MCF 10A (cell line): ENCODE measurements at regions of chr2 and their contacts with region 1.

Region 1: DNA sequence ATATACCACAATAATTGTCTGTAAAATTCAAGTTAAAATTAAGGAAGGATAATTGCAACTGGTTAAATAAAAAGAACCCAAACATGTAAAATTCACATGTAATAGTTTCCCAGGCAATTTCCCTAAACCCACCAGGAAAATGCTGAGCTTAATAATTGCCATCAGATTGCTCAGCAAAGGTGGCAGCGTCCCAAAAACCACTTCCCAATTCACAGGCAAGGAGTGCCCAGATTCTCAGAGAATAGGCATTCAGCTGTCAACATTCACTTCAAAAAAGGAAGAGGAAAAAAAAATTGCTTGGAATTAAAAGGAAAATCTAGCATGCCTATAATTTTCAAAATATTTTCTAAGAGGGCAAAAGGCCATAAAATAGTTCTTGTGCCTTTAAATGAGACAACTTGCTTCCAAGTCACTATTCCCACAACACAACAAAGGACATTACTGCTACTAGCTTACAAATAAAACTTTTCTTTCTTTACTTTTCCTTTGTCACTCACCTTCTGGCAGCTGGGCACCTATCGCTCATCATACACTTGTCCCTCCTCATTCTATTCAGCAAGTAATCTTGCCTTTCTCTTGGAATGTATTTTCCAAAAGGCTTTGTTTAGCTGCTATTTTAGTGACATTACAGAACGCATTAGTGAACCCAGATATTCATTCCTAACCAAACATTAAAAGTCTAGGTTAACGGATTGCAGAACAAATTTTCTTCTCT is 15.2 kb downstream of the SRBD1 start:
- DNase-seq: peak; percentile 42
- H3K4me3 Mint-ChIP-seq: peak overlapping the region; percentile 1
- H3K27ac Mint-ChIP-seq: peak overlapping the region; percentile 80
- H3K4me1 Mint-ChIP-seq: peaks cover 10% of the 10 kb centered on the region
- H3K27me3 Mint-ChIP-seq: no peaks in the 10 kb centered on the region
- CTCF ChIP-seq: no peak

Region 2: DNA sequence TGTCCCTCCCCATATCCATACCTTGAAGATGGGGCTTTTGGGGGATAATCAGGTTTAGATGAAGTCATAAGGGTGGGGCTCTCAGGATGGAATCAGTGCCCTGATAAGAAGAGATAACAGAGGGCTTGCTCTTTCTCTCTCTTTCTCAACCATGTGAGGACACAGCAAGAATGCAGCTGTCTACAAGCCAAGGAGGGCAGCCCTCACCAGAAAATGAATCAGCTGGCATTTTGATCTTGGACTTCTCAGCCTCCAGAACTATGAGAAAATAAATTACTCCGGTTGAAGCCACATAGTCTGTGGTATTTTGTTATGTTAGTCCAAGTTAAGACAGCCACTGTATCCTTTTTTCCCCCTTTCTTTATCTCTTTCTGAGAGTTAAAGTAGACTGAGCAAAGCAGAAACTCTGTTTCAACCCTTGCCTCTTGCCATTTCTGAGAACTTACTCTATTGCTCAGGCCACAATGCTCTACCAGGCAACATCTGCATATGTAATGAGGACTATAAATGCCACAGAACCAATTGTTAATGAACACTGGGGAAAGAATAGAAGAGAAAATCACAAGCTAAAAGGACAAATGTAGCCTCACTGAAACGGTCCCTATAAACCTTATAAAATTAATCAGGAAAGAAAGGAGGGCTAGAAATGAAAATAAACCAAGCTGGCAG is 41.7 kb before region 1 on chr2:
- CTCF ChIA-PET with region 1: no interaction called
- POLR2A ChIA-PET with region 1: no interaction called
- intact Hi-C with region 1: no loop called
- DNase-seq: no peak
- H3K4me3 Mint-ChIP-seq: no peak overlapping the region
- H3K27ac Mint-ChIP-seq: no peak overlapping the region
- H3K4me1 Mint-ChIP-seq: peaks cover under 1% of the 10 kb centered on the region
- H3K27me3 Mint-ChIP-seq: no peaks in the 10 kb centered on the region
- CTCF ChIP-seq: no peak

Region 3: GRCh38 chr2:45585267-45585861 is 10.5 kb before region 1 on chr2:
- CTCF ChIA-PET with region 1: interaction called, 12 read pairs
- POLR2A ChIA-PET with region 1: interaction called, 3 read pairs
- intact Hi-C with region 1: no loop called
- DNase-seq: peak; percentile 59
- H3K4me3 Mint-ChIP-seq: no peak overlapping the region
- H3K27ac Mint-ChIP-seq: no peak overlapping the region
- H3K4me1 Mint-ChIP-seq: peaks cover 7% of the 10 kb centered on the region
- H3K27me3 Mint-ChIP-seq: no peaks in the 10 kb centered on the region
- CTCF ChIP-seq: peak; percentile 54

Region 4: DNA sequence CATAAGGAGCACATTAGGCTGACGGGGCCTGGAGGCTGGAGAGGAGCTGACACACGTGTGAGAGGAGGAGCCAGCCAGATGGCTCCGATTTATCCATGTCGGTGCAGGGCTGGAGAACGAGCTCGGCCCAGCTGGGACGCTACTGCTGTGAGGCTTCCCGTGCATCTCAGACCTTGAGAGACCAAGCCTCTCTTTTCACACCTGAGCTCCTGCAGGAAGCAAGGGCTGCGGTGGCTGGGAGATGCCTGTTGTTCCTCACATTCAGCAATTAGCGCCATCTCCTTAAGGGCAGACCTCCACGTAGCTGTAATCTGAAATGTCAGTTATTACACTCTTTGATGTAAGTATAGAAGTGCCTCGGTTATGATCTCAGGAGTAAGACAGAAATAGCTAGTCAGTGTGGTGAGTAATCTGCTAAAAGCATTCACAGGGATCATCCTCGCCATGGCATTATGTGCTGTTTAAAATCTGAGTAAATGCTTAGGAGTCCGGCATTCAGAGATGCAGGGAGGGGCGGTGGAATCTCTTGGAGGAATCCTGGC is 163.5 kb after region 1 on chr2:
- CTCF ChIA-PET with region 1: no interaction called
- POLR2A ChIA-PET with region 1: no interaction called
- intact Hi-C with region 1: no loop called
- DNase-seq: no peak
- H3K4me3 Mint-ChIP-seq: no peak overlapping the region
- H3K27ac Mint-ChIP-seq: no peak overlapping the region
- H3K4me1 Mint-ChIP-seq: peaks cover 6% of the 10 kb centered on the region
- H3K27me3 Mint-ChIP-seq: no peaks in the 10 kb centered on the region
- CTCF ChIP-seq: no peak